GM18951 (cell line): ENCODE measurements at regions of chr1 and their contacts with region 1.

Region 1: DNA sequence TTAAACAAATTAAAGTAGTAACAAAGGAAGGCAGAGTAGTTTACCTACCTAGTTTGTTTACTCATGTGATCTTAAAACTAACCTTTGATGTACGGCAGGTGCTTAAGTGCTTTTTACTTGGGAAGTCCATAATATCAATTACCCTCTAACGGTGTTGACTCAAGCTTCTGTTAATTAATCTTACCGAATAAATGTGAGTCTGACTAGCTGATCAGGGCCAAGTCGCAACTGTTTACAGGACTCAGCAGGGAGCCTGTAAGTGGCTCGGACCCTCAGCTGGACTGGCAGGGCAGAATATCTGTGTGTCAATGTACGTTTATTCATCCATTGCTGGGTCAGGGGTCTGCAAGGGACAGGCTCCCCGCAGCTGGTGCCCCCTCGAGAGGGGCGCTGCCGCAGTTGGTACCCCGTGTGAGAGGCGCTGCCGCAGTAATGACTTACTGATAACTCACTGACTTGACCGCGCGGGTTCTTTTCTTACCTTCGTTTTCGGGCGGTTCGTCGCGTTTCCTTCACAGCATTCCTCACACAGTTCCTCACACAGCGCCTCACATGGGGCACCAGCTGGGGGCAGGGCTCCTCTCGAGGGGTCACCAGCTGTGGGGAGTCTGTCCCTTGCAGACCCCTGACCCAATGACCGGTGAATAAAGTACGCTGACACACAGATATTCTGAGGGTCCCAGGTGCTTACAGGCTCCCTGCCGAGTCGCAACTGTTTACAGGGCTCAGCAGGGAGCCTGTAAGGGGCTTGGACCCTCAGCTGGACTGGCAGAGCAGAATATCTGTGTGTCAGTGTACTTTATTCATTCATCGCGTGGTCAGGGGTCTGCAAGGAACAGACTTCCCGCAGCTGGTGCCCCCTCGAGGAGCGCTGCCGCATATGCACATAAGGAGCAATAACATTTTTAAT is 3.0 kb downstream of the FMO1 start:
- POLR2A ChIP-seq: no peak

Region 2: GRCh38 chr1:170910273-170910672 is 341.0 kb before region 1 on chr1:
- in situ Hi-C with region 1: no loop called
- POLR2A ChIP-seq: no peak

Region 3: DNA sequence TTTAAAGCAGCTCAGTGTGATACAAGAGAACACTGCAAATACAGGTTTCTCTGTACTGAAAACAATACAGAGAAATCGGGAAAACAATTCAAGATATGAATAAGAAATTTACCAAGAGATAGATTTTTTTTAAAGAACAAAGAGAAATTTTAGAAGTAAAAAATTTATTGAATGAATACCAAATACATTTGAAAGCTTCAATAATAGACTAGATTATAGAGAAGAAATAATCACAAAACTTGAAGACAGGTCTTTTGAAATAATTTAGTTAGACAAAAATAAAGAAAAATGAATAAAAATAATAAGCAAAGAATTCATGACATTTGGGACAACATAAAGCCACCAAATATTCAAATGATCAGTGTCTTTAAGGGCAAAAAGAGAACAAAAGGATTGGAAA is 49.1 kb after region 1 on chr1:
- in situ Hi-C with region 1: loop called (anchors 10 kb)
- POLR2A ChIP-seq: no peak